CD4-positive, alpha-beta T cell (primary cell): ENCODE measurements at regions of chr12 and their contacts with region 1.

Region 1: DNA sequence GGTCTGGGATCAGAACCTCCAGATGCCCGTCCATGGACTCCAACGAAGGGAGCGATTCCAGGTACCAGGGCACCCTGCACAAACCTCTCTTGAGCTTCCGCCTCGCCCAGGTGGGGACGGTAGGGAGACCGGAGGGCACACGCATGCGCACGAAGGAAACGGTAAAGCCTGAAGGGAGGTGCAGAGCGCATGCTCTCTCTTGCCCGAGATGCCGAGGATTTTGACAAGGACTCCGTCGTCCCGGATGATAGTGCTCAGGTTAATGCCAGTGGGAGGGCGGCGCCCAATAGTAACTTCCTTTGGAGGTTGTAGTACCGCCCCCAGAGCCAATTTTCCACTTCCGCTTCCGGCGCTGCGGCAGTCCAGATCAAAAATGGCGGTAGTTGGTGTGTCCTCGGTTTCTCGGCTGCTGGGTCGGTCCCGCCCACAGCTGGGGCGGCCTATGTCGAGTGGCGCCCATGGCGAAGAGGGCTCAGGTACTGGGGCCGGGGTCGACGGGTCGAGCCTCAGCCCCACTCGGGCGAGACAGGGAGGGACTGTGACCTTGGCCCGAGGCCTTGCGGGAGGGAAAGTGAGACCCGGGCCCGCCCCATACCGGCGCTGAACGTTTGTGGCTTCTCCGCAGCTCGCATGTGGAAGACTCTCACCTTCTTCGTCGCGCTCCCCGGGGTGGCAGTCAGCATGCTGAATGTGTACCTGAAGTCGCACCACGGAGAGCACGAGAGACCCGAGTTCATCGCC is at the start of gene COX6A1:
- DNase-seq: peak; percentile 91 to 100 (median 96)
- ATAC-seq: peak; percentile 94
- H3K4me3 ChIP-seq: peak within 1 kb of the TSS; percentile 88
- H3K4me3 Mint-ChIP-seq: peak within 1 kb of the TSS; percentile 97
- H3K27ac ChIP-seq: peak within 1 kb of the TSS; percentile 69 to 88
- H3K27ac Mint-ChIP-seq: peak within 1 kb of the TSS; percentile 94
- H3K4me1 ChIP-seq: peaks cover 26% of the 10 kb centered on the region
- H3K4me1 Mint-ChIP-seq: peaks cover 31% of the 10 kb centered on the region
- H3K27me3 ChIP-seq: no peaks in the 10 kb centered on the region
- H3K27me3 Mint-ChIP-seq: no peaks in the 10 kb centered on the region
- CTCF ChIP-seq: no peak
- total RNA-seq, gene COX6A1: 112 to 116 TPM

Region 2: GRCh38 chr12:120356567-120357030 is 81.3 kb before region 1 on chr12:
- CTCF ChIA-PET with region 1: no interaction called
- POLR2A ChIA-PET with region 1: no interaction called
- intact Hi-C with region 1: no loop called
- DNase-seq: peak; percentile 56 to 81 (median 65)
- ATAC-seq: peak; percentile 88
- H3K4me3 ChIP-seq: no peak overlapping the region
- H3K4me3 Mint-ChIP-seq: no peak overlapping the region
- H3K27ac ChIP-seq: no peak overlapping the region
- H3K27ac Mint-ChIP-seq: no peak overlapping the region
- H3K4me1 ChIP-seq: peaks cover 5% of the 10 kb centered on the region
- H3K4me1 Mint-ChIP-seq: no peaks in the 10 kb centered on the region
- H3K27me3 ChIP-seq: peaks cover 18 to 28% of the 10 kb centered on the region in 2 experiments
- H3K27me3 Mint-ChIP-seq: peaks cover 54% of the 10 kb centered on the region
- CTCF ChIP-seq: peak; percentile 91

Region 3: DNA sequence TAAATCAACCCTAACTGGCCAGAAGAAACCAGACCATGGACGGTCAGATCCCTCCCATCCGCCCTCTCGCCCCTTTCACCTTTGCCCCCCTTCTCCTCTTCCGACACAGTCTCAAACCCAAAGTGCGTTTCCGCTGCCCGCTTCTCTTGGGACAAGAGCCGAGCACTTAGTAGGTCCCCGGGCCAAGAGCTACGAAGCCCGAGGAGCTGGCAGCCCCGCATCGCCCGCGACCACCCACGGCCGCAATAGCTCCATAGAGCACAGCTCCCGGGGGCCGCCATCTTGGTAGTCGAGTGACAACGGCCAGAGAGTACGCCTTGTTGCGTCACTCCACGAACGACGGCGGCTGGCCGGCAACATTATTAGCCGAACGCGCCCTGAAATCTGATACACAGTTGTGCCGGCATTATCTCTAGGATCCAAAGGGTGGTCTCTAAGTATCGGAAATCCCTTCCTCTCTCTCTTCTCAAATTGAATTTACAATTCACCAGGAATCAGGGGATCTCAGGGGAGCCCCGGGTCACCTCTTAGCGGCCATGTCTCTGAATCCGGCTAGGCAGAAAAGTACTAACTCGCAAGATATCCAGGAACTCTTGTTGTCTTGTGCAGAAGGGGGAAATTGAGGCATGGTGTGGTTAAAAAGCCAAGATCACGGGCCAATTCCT is 91.1 kb after region 1 on chr12 and contains the start of gene COQ5:
- CTCF ChIA-PET with region 1: interaction called, 3 read pairs
- POLR2A ChIA-PET with region 1: interaction called, 4 read pairs
- intact Hi-C with region 1: loop called (anchors 2 to 5 kb)
- DNase-seq: peak; percentile 70 to 89 (median 79)
- ATAC-seq: peak; percentile 97
- H3K4me3 ChIP-seq: peak within 1 kb of the TSS; percentile 92
- H3K4me3 Mint-ChIP-seq: peak within 1 kb of the TSS; percentile 100
- H3K27ac ChIP-seq: peak within 1 kb of the TSS; percentile 69 to 73
- H3K27ac Mint-ChIP-seq: peak within 1 kb of the TSS; percentile 95
- H3K4me1 ChIP-seq: peaks cover 27% of the 10 kb centered on the region
- H3K4me1 Mint-ChIP-seq: peaks cover 32% of the 10 kb centered on the region
- H3K27me3 ChIP-seq: no peaks in the 10 kb centered on the region
- H3K27me3 Mint-ChIP-seq: no peaks in the 10 kb centered on the region
- CTCF ChIP-seq: no peak
- total RNA-seq, gene COQ5: 6.9 to 7.1 TPM

Region 4: GRCh38 chr12:120534203-120534702 is 96.3 kb after region 1 on chr12 and contains the start of gene RNF10:
- CTCF ChIA-PET with region 1: interaction called, 3 read pairs
- POLR2A ChIA-PET with region 1: interaction called, 6 read pairs
- intact Hi-C with region 1: loop called (anchors 2 to 5 kb)
- DNase-seq: peak; percentile 53 to 92 (median 68)
- ATAC-seq: peak; percentile 65
- H3K4me3 ChIP-seq: peak within 1 kb of the TSS; percentile 92
- H3K4me3 Mint-ChIP-seq: peak within 1 kb of the TSS; percentile 91
- H3K27ac ChIP-seq: peak within 1 kb of the TSS; percentile 66 to 89
- H3K27ac Mint-ChIP-seq: peak within 1 kb of the TSS; percentile 91
- H3K4me1 ChIP-seq: peaks cover 49% of the 10 kb centered on the region
- H3K4me1 Mint-ChIP-seq: peaks cover 62% of the 10 kb centered on the region
- H3K27me3 ChIP-seq: no peaks in the 10 kb centered on the region
- H3K27me3 Mint-ChIP-seq: no peaks in the 10 kb centered on the region
- CTCF ChIP-seq: no peak
- total RNA-seq, gene RNF10: 441 to 446 TPM